Ascending aorta (tissue), 2 donors: ENCODE measurements at regions of chr19 and their contacts with region 1.

Region 1: DNA sequence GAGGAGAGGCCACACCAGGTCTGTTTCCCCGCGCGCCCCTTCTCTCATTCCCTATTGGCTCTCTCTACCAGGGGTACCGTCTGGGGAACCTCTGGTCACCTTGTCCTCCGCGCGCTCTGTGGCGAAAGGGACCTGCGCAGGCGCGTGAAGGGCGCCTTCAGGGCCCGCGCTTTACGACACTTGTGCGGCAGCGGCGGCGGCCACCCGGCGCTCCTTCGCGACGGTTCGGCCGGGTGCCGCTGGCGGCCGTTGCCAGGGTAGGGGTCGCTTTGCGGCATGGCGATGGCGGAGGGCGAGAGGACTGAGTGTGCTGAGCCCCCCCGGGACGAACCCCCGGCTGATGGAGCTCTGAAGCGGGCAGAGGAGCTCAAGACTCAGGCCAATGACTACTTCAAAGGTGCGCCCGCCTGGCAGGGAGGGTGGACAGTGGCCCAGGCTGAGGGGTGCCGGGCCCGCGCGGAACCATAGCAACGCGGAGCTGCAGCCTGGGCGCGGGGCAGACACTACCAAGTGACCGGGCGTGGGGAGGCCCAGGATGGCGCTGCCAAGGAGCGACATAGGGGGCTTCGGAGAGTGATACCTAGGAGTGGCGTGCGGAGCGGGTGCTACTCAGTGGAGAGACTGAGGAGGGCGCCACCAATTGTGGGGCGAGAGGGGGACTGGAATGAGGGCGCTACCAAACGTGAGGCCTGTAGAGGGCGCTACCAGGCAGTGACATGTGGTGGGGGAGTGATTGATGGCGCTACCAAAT is at the start of gene PPP5C:
- DNase-seq: peak; percentile 48 to 94
- H3K4me3 ChIP-seq: peak within 1 kb of the TSS; percentile 91 to 98
- H3K27ac ChIP-seq: peak within 1 kb of the TSS; percentile 66 to 72
- H3K4me1 ChIP-seq: peaks cover 23 to 49% of the 10 kb centered on the region in 2 donors
- H3K27me3 ChIP-seq: no peaks in the 10 kb centered on the region
- CTCF ChIP-seq: peak; percentile 72 to 84 (median 80)
- total RNA-seq, gene PPP5C: 96.1 TPM

Region 2: GRCh38 chr19:46254776-46255175 is 92.2 kb before region 1 on chr19:
- intact Hi-C with region 1: no loop called
- DNase-seq: no peak
- H3K4me3 ChIP-seq: no peak overlapping the region
- H3K27ac ChIP-seq: no peak overlapping the region
- H3K4me1 ChIP-seq: no peaks in the 10 kb centered on the region
- H3K27me3 ChIP-seq: no peaks in the 10 kb centered on the region
- CTCF ChIP-seq: no peak

Region 3: DNA sequence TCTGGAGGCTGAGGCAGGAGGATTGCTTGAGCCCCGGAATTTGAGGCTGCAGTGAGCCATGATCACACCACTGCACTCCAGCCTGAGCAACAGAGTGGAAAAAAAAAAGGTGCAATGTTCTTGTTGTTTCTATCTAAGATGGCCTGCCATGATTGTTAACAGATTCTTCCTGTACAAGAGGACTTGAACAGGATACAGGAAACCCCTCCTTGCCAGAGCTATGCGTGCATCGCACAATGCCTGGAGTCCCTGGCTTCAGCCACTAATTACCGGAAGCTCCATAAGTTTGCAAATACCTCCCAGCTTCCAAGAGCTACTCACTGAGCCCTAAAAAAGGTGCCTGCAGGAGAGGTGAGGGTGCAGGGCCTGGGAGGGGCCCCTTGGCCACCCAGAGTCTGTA is 63.2 kb before region 1 on chr19:
- intact Hi-C with region 1: loop called (anchors 2 kb)
- DNase-seq: no peak
- H3K4me3 ChIP-seq: no peak overlapping the region
- H3K27ac ChIP-seq: no peak overlapping the region
- H3K4me1 ChIP-seq: no peaks in the 10 kb centered on the region
- H3K27me3 ChIP-seq: no peaks in the 10 kb centered on the region
- CTCF ChIP-seq: no peak

Region 4: GRCh38 chr19:46373421-46374359 is 26.7 kb after region 1 on chr19:
- intact Hi-C with region 1: loop called (anchors 2 kb)
- DNase-seq: peak; percentile 51 to 84
- H3K4me3 ChIP-seq: peak overlapping the region in 1 of 2 donors; percentile 35
- H3K27ac ChIP-seq: peak overlapping the region; percentile 85 to 90
- H3K4me1 ChIP-seq: peaks cover 10 to 32% of the 10 kb centered on the region in 2 donors
- H3K27me3 ChIP-seq: no peaks in the 10 kb centered on the region
- CTCF ChIP-seq: no peak

Region 5: DNA sequence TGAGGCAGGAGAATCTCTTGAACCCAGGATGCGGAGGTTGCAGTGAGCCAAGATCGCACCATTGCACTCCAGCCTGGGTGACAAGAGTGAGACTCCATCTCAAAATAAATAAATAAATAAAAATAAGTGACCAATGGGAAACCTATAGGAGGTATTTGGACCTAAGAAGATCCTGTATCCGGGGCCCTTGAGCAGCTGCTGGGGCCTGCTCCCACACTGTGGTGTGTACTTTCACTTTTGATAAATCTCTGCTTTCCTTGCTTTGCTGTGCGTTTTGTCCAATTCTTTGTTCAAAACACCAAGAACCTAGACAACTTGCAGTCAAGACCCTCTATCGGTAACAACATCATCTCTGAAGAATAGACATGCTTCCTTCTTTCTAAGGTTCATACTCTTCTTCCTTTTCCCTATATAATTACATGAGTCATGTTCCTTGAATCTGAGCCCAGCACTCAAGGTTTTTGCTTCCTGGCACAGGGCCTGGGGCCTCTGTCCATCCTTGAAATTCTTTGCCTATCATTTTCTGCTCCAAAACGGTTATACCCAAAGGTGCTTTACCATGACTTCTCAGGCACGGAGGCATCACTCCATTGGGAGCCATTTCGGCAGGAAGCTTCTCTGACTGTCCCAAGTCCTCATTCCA is 95.9 kb after region 1 on chr19:
- intact Hi-C with region 1: no loop called
- DNase-seq: no peak
- H3K4me3 ChIP-seq: peak overlapping the region in 1 of 2 donors; percentile 23
- H3K27ac ChIP-seq: peak overlapping the region; percentile 2 to 65
- H3K4me1 ChIP-seq: peaks cover 0 to 20% of the 10 kb centered on the region in 2 donors
- H3K27me3 ChIP-seq: no peaks in the 10 kb centered on the region
- CTCF ChIP-seq: no peak

Region 6: GRCh38 chr19:46513461-46514236 is 166.7 kb after region 1 on chr19:
- intact Hi-C with region 1: loop called (anchors 5 kb)
- DNase-seq: peak in 1 of 2 donors; percentile 85
- H3K4me3 ChIP-seq: peak overlapping the region in 1 of 2 donors; percentile 13
- H3K27ac ChIP-seq: peak overlapping the region in 1 of 2 donors; percentile 5
- H3K4me1 ChIP-seq: peaks cover 3 to 14% of the 10 kb centered on the region in 2 donors
- H3K27me3 ChIP-seq: no peaks in the 10 kb centered on the region
- CTCF ChIP-seq: peak; percentile 97 to 99 (median 98)